PC-3 (cell line): ENCODE measurements at regions of chr11 and their contacts with region 1.

Region 1: DNA sequence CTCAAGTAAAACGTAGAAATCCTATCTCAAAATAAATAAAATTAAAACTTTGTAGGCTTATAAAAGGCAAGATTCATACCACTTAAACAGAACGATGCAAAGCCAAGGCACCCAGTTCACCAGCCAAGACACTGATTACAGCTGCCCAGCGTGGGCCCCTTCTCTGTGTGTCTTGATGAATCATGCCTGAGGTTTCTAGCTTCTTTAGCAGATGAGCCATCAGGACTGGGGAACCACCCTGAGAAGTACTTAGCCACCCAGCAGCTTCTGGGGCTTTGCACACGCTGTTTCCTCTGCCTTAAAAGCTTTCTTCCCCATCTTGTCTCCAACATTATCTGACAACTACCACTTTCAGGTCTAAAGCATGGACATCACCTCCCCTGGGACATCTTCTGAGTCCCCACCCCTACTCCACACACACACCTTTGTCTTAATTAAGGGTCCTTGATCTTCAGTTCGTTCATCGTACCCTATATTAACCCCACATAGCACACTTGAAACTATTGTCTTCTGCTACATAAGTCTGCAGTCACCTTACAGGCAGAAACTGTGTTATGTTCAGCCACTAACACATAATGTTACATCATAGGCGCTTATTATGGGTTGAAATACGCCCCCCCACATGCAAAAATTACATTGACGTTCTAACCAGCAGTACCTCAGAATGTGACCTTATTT is 8.7 kb upstream of the LAYN start:
- DNase-seq: peak; percentile 95
- ATAC-seq: peak; percentile 93
- H3K4me3 ChIP-seq: 0 out of 2 replicates have a peak overlapping the region, but pooled peaks have one; percentile 10
- H3K27ac ChIP-seq: peak overlapping the region; percentile 76
- H3K4me1 ChIP-seq: peaks cover 61% of the 10 kb centered on the region
- H3K27me3 ChIP-seq: no peaks in the 10 kb centered on the region
- CTCF ChIP-seq: no peak

Region 2: GRCh38 chr11:111206472-111206871 is 325.4 kb before region 1 on chr11:
- CTCF ChIA-PET with region 1: no interaction called
- POLR2A ChIA-PET with region 1: no interaction called
- intact Hi-C with region 1: loop called (anchors 10 kb)
- DNase-seq: peak; percentile 92
- ATAC-seq: peak; percentile 95
- H3K4me3 ChIP-seq: no peak overlapping the region
- H3K27ac ChIP-seq: peak overlapping the region; percentile 70
- H3K4me1 ChIP-seq: peaks cover 26% of the 10 kb centered on the region
- H3K27me3 ChIP-seq: no peaks in the 10 kb centered on the region
- CTCF ChIP-seq: no peak

Region 3: DNA sequence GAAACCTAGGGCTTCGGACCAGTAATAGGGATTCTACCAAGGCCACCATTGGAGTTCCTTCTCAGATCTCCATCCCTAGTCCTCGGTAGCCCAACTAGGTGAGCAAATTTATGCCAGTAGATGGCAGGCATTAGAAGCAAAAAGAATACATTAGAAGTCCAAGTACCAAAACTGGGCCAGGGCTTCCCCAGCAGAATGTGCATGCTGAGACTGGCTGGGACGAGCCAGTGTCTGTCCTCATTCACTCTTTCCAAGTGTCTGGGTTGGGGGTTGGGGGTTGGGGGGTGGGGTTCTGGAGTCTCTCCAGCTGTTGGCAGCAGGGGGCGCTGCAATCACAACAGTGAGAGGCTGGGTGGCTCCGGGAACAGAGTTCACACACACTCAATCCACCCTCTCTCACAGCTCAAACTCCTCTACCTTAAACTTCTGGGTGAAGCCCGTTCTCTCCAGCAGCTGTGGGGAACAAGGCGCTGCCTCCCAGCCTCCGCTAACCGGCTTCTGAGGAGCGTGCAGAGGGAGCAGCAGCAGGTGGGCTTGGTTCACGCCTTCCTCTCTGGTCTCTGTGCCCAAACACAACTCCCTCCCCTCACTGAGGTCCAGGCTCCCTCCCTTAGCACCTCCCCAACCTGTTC is 77.1 kb before region 1 on chr11:
- CTCF ChIA-PET with region 1: interaction called, 8 read pairs
- POLR2A ChIA-PET with region 1: no interaction called
- intact Hi-C with region 1: loop called (anchors 1 kb)
- DNase-seq: peak; percentile 80
- ATAC-seq: peak; percentile 90
- H3K4me3 ChIP-seq: no peak overlapping the region
- H3K27ac ChIP-seq: no peak overlapping the region
- H3K4me1 ChIP-seq: peaks cover 6% of the 10 kb centered on the region
- H3K27me3 ChIP-seq: no peaks in the 10 kb centered on the region
- CTCF ChIP-seq: peak; percentile 57

Region 4: GRCh38 chr11:111554532-111554931 is 22.7 kb after region 1 on chr11:
- CTCF ChIA-PET with region 1: interaction called, 4 read pairs
- POLR2A ChIA-PET with region 1: interaction called, 3 read pairs
- intact Hi-C with region 1: loop called (anchors 1 kb)
- DNase-seq: peak; percentile 96
- ATAC-seq: peak; percentile 72
- H3K4me3 ChIP-seq: peak overlapping the region; percentile 51
- H3K27ac ChIP-seq: peak overlapping the region; percentile 95
- H3K4me1 ChIP-seq: peaks cover 57% of the 10 kb centered on the region
- H3K27me3 ChIP-seq: no peaks in the 10 kb centered on the region
- CTCF ChIP-seq: no peak

Region 5: GRCh38 chr11:111565114-111565720 is 33.4 kb after region 1 on chr11:
- CTCF ChIA-PET with region 1: no interaction called
- POLR2A ChIA-PET with region 1: no interaction called
- intact Hi-C with region 1: loop called (anchors 1 kb)
- DNase-seq: peak; percentile 94
- ATAC-seq: no peak
- H3K4me3 ChIP-seq: no peak overlapping the region
- H3K27ac ChIP-seq: no peak overlapping the region
- H3K4me1 ChIP-seq: peaks cover 32% of the 10 kb centered on the region
- H3K27me3 ChIP-seq: no peaks in the 10 kb centered on the region
- CTCF ChIP-seq: peak; percentile 88

Region 6: GRCh38 chr11:111652184-111652583 is 120.4 kb after region 1 on chr11:
- CTCF ChIA-PET with region 1: no interaction called
- POLR2A ChIA-PET with region 1: no interaction called
- intact Hi-C with region 1: no loop called
- DNase-seq: no peak
- ATAC-seq: no peak
- H3K4me3 ChIP-seq: no peak overlapping the region
- H3K27ac ChIP-seq: no peak overlapping the region
- H3K4me1 ChIP-seq: peaks cover 14% of the 10 kb centered on the region
- H3K27me3 ChIP-seq: no peaks in the 10 kb centered on the region
- CTCF ChIP-seq: no peak